ENCODE measurements at regions of chr6 and their contacts with region 1.

Region 1: DNA sequence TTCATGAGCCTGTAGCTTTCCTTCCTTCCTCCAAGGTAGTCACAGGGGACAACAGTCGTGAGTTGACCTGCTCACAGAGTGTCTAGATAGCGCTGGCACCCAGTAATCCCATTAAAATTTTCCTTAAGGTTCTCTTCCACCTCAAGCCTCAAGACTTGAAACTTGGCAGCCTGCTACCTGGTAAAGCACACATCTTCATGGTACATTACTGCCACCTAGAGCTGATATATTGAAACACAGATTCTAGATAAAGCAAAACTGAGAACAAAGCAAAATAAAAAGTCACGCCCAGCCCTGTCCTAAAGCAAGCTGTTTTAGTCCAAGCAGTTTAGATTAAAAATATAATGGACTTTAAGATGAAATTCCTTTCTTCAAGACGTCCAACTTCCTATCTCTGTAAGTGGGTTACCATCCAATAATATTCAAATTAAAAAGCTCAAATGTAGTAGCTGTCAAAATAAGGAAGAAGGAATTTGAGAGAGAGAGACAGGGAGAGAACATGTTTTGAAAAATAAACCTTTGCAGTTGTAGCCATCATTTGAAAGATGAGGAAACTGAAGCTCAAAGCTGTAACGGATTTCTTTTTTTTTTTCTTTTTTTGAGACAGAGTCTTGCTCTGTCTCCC is 50.7 kb upstream of the CD83 start:
- DNase-seq: peak; percentile 31
- H3K4me3 Mint-ChIP-seq: no peak overlapping the region
- H3K27ac Mint-ChIP-seq: no peak overlapping the region
- H3K4me1 Mint-ChIP-seq: peaks cover 2% of the 10 kb centered on the region
- H3K27me3 Mint-ChIP-seq: peaks cover 5% of the 10 kb centered on the region

Region 2: GRCh38 chr6:13431861-13432465 is 634.9 kb before region 1 on chr6:
- CTCF ChIA-PET with region 1: no interaction called
- intact Hi-C with region 1: no loop called
- DNase-seq: peak; percentile 67
- H3K4me3 Mint-ChIP-seq: no peak overlapping the region
- H3K27ac Mint-ChIP-seq: peak overlapping the region; percentile 79
- H3K4me1 Mint-ChIP-seq: peaks cover 71% of the 10 kb centered on the region
- H3K27me3 Mint-ChIP-seq: no peaks in the 10 kb centered on the region

Region 3: GRCh38 chr6:13795041-13795750 is 271.7 kb before region 1 on chr6:
- CTCF ChIA-PET with region 1: interaction called, 27 read pairs
- intact Hi-C with region 1: loop called (anchors 1 kb)
- DNase-seq: peak; percentile 97
- H3K4me3 Mint-ChIP-seq: no peak overlapping the region
- H3K27ac Mint-ChIP-seq: no peak overlapping the region
- H3K4me1 Mint-ChIP-seq: peaks cover 14% of the 10 kb centered on the region
- H3K27me3 Mint-ChIP-seq: no peaks in the 10 kb centered on the region

Region 4: DNA sequence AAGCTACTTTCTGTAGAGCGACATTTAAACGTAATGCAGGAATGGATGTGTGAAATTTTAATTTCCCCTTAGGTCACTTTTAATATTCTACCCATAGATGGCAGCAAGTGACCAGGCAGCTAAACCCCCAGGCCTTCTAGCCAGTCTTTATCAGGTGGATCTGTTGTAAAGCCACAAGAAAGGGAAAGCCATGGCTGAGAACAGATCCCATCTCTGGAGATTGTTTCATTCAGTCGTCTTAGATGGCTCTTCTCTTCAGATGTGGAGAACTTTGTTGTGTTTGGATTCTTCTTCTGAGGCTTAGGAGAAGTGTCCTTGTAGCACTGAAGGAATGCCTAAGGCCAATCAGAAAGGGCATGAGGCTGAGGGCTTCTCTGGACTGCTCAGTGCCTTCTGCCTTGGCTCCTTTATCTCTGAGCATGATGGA is 157.9 kb before region 1 on chr6:
- CTCF ChIA-PET with region 1: interaction called, 91 read pairs
- intact Hi-C with region 1: loop called (anchors 1 kb)
- DNase-seq: peak; percentile 62
- H3K4me3 Mint-ChIP-seq: no peak overlapping the region
- H3K27ac Mint-ChIP-seq: no peak overlapping the region
- H3K4me1 Mint-ChIP-seq: peaks cover 2% of the 10 kb centered on the region
- H3K27me3 Mint-ChIP-seq: peaks cover 26% of the 10 kb centered on the region

Region 5: GRCh38 chr6:14055541-14055940 is 11.4 kb before region 1 on chr6:
- CTCF ChIA-PET with region 1: interaction called, 12 read pairs
- intact Hi-C with region 1: no loop called
- DNase-seq: no peak
- H3K4me3 Mint-ChIP-seq: no peak overlapping the region
- H3K27ac Mint-ChIP-seq: no peak overlapping the region
- H3K4me1 Mint-ChIP-seq: no peaks in the 10 kb centered on the region
- H3K27me3 Mint-ChIP-seq: peaks cover 14% of the 10 kb centered on the region

Region 6: GRCh38 chr6:14108571-14109410 is 41.9 kb after region 1 on chr6:
- CTCF ChIA-PET with region 1: interaction called, 10 read pairs
- intact Hi-C with region 1: no loop called
- DNase-seq: peak; percentile 52
- H3K4me3 Mint-ChIP-seq: peak overlapping the region; percentile 30
- H3K27ac Mint-ChIP-seq: peak overlapping the region; percentile 78
- H3K4me1 Mint-ChIP-seq: peaks cover 31% of the 10 kb centered on the region
- H3K27me3 Mint-ChIP-seq: peaks cover 3% of the 10 kb centered on the region

Region 7: GRCh38 chr6:14144678-14145113 is 77.8 kb after region 1 on chr6:
- CTCF ChIA-PET with region 1: interaction called, 40 read pairs
- intact Hi-C with region 1: no loop called
- DNase-seq: peak; percentile 82
- H3K4me3 Mint-ChIP-seq: no peak overlapping the region
- H3K27ac Mint-ChIP-seq: no peak overlapping the region
- H3K4me1 Mint-ChIP-seq: peaks cover 2% of the 10 kb centered on the region
- H3K27me3 Mint-ChIP-seq: no peaks in the 10 kb centered on the region